ENCODE measurements at regions of chr10 and their contacts with region 1.

Region 1: GRCh38 chr10:92150823-92151222 is 140.1 kb downstream of the CPEB3 start:
- DNase-seq: peak; percentile 43

Region 2: GRCh38 chr10:91992031-91992430 is 158.8 kb before region 1 on chr10:
- in situ Hi-C with region 1: no loop called
- DNase-seq: no peak

Region 3: DNA sequence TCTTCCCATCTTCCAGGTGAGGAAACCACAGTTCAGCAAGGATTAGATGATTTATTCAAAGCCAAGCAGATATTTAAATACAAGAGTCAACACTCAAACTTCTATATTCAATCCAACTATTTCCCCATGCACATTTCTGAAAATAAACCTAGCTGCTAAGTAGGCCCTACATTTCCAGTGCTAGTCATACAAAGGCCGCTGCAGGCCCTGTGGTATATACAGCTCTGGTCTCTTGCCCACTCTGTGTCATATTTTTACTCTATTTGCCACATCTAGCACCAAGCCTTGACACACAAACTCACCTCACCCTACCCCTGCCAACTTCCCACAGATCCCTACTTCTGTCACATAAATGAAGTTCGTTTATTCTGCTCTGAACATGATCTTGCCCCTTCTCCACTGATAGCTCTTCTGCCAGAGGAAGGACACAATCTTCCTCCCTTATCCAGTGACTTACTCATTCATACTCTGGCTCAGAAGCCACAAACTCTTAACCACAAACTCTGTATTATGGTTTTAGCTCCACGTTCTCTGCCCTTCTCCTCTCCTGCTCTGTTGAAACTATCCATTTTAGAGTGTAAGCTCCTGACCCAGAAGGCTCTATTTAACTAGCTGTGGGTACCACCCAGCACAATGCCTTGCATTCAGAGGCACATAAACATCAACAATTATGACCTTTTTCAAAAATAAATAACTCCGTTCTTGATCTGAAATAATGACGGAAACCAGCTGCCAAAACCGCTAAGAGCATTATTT is 40.6 kb before region 1 on chr10:
- in situ Hi-C with region 1: no loop called
- DNase-seq: no peak

Region 4: GRCh38 chr10:92184977-92185376 is 34.2 kb after region 1 on chr10:
- in situ Hi-C with region 1: loop called (anchors 5 kb)
- DNase-seq: peak; percentile 30